ENCODE measurements at regions of chr6 and their contacts with region 1.

Region 1: DNA sequence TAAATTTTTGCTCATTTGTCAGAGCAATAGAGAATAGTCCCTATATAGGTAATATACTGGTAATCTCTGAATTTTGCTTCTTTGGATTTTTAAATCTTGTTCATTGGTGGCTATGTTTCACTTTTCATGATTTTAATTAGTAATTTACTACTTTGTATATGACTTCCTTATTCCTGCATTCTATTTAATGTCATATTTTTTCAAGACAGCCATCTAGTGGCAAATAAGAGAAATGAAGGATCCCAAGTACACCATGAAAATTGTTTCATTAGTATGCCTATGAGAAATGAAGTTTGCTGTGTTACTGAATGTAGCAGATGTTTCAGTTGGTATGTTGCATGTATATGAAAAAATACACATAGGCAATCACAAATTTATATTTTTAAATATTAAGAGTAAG is 82.4 kb downstream of the ZNF292 start:
- DNase-seq: no peak
- H3K4me3 ChIP-seq: no peak overlapping the region
- H3K27ac ChIP-seq: no peak overlapping the region
- H3K4me1 ChIP-seq: no peaks in the 10 kb centered on the region
- H3K27me3 ChIP-seq: no peaks in the 10 kb centered on the region
- CTCF ChIP-seq: peak in 5 of 6 experiments; percentile 28 to 56 (median 47)
- POLR2A ChIP-seq: no peak

Region 2: DNA sequence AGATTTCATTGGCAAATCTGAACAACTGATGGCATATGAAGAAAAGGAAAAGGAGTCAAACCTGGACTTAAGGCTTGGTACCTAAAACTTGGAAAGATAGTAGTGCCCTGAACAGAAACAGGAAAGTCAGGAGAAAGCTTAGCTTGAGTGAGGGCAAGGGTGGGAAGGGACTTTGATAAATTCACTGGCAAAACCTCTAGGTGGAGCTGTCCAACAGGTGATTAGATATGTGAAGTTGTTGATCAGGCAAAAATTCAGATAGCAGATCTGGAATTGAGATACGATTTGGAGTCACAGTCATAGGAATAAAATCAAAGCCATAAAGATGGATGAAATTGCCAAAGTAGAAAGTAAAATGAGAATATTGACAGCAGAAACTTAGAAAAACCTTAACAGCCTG is 98.6 kb before region 1 on chr6:
- intact Hi-C with region 1: loop called (anchors 10 kb)
- DNase-seq: peak in 1 of 2 donors; percentile 8
- H3K4me3 ChIP-seq: no peak overlapping the region
- H3K27ac ChIP-seq: no peak overlapping the region
- H3K4me1 ChIP-seq: no peaks in the 10 kb centered on the region
- H3K27me3 ChIP-seq: no peaks in the 10 kb centered on the region
- CTCF ChIP-seq: peak; percentile 26 to 89 (median 74)
- POLR2A ChIP-seq: no peak

Measured in thyroid gland (tissue), 4 donors.